Naive thymus-derived CD4-positive, alpha-beta T cell (primary cell): ENCODE measurements at regions of chr14 and their contacts with region 1.

Region 1: DNA sequence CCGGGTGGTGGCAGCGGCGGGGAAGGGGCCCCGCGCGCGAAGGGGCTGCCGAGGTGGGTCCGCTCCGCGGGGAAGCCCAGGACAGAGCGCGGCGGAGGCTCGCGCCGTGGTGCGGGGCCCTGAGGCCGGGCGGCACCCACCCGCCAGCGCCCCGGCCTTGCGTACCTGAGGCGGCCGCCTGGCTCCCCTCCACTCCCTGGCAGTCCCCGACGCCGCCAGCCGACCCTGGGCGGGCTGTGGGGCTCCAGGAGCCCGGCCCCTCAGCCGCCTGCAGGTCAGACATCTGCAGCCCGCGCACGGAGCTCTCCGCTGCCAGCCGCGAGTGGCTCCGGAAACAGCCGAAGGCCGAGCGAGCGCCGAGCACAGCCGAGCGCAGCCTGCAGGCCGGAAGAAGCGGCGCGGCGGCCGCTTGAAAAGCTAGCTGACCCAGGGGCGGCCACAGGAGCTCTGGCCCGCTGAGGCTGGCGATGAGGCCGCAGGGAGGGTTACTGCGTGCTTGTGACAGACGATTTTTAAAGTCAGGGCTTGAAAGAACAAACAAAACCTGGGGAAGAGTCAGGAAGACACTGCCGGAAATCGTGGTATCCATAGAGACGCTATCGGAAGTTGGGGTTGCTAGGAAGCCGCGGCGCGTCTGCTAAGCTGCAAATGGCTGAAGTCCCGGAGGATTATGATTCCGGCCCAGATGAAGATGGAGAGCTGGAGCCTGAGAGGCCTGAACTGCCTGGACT is at the starts of genes SAMD15 and TMED8:
- DNase-seq: peak; percentile 77 to 88 (median 83)
- ATAC-seq: peak; percentile 96
- H3K4me3 ChIP-seq: peak within 1 kb of the TSS; percentile 99
- H3K4me3 Mint-ChIP-seq: peak within 1 kb of the TSS in 7 of 10 donors; percentile 88 to 97 (median 93)
- H3K27ac ChIP-seq: peak within 1 kb of the TSS; percentile 87
- H3K27ac Mint-ChIP-seq: peak within 1 kb of the TSS; percentile 52 to 93 (median 77)
- H3K4me1 ChIP-seq: peaks cover 14 to 18% of the 10 kb centered on the region in 2 donors
- H3K4me1 Mint-ChIP-seq: peaks cover 17 to 41% (median 39%) of the 10 kb centered on the region in 7 donors
- H3K27me3 ChIP-seq: no peaks in the 10 kb centered on the region
- H3K27me3 Mint-ChIP-seq: peaks cover 0 to 10% (median 0%) of the 10 kb centered on the region in 5 donors
- total RNA-seq, gene SAMD15: 0.27 to 0.46 (median 0.42) TPM in 3 of 5 experiments, not detected in the others
- total RNA-seq, gene TMED8: 5.5 to 18.6 (median 7.0) TPM

Region 2: GRCh38 chr14:76672123-76672522 is 704.8 kb before region 1 on chr14:
- CTCF ChIA-PET with region 1: no interaction called
- POLR2A ChIA-PET with region 1: no interaction called
- intact Hi-C with region 1: no loop called
- DNase-seq: no peak
- ATAC-seq: no peak
- H3K4me3 ChIP-seq: no peak overlapping the region
- H3K4me3 Mint-ChIP-seq: no peak overlapping the region
- H3K27ac ChIP-seq: no peak overlapping the region
- H3K27ac Mint-ChIP-seq: no peak overlapping the region
- H3K4me1 ChIP-seq: no peaks in the 10 kb centered on the region
- H3K4me1 Mint-ChIP-seq: no peaks in the 10 kb centered on the region
- H3K27me3 ChIP-seq: peaks cover 0 to 3% of the 10 kb centered on the region in 2 donors
- H3K27me3 Mint-ChIP-seq: peaks cover 9 to 33% (median 25%) of the 10 kb centered on the region in 5 donors

Region 3: GRCh38 chr14:77799863-77800730 is 423.2 kb after region 1 on chr14 and contains the start of gene ADCK1:
- CTCF ChIA-PET with region 1: no interaction called
- POLR2A ChIA-PET with region 1: no interaction called
- intact Hi-C with region 1: loop called (anchors 1 to 5 kb)
- DNase-seq: peak; percentile 74 to 87 (median 84)
- ATAC-seq: peak; percentile 94
- H3K4me3 ChIP-seq: peak within 1 kb of the TSS; percentile 71
- H3K4me3 Mint-ChIP-seq: peak within 1 kb of the TSS; percentile 83 to 89 (median 87)
- H3K27ac ChIP-seq: peak within 1 kb of the TSS; percentile 81
- H3K27ac Mint-ChIP-seq: peak within 1 kb of the TSS; percentile 34 to 92 (median 78)
- H3K4me1 ChIP-seq: no peaks in the 10 kb centered on the region
- H3K4me1 Mint-ChIP-seq: peaks cover 0 to 17% (median 6%) of the 10 kb centered on the region in 7 donors
- H3K27me3 ChIP-seq: no peaks in the 10 kb centered on the region
- H3K27me3 Mint-ChIP-seq: no peaks in the 10 kb centered on the region
- total RNA-seq, gene ADCK1: 4.5 to 10.6 (median 10.3) TPM